B cell (primary cell): ENCODE measurements at regions of chr6 and their contacts with region 1.

Region 1: DNA sequence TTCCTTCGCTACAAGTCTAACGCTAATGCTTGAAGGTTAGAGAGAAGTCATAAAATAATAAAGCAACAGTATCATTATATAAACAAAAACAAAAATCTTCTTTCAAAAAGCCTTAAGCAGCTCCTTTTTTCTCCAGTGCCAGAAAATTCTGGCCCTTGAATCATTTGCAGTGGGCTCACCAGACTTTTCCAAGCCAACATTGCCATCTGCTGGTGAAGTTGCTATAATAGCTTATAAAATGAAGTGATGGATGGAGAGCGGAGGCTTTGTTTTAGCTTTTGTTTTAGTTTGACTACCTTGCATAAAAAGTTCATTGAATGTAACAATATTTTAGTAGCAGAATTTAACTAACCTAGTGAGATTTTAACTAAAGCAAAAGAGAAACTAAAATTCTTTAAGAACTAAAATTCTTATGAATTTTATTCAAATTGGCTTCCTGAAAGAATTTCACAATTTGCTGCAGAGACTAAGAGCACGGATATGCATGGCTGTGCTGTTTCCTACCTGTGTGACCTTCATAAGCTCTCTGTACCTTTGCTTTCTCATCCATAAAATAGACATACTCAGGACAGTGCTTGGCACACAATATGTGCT is 44.8 kb upstream of the SLC2A12 start:
- DNase-seq: peak; percentile 78
- ATAC-seq: no peak
- H3K4me3 ChIP-seq: no peak overlapping the region
- H3K4me3 Mint-ChIP-seq: no peak overlapping the region
- H3K27ac ChIP-seq: no peak overlapping the region
- H3K27ac Mint-ChIP-seq: no peak overlapping the region
- H3K4me1 ChIP-seq: no peaks in the 10 kb centered on the region
- H3K4me1 Mint-ChIP-seq: peaks cover 4% of the 10 kb centered on the region
- H3K27me3 ChIP-seq: no peaks in the 10 kb centered on the region
- H3K27me3 Mint-ChIP-seq: peaks cover 18% of the 10 kb centered on the region
- CTCF ChIP-seq: peak; percentile 87

Region 2: DNA sequence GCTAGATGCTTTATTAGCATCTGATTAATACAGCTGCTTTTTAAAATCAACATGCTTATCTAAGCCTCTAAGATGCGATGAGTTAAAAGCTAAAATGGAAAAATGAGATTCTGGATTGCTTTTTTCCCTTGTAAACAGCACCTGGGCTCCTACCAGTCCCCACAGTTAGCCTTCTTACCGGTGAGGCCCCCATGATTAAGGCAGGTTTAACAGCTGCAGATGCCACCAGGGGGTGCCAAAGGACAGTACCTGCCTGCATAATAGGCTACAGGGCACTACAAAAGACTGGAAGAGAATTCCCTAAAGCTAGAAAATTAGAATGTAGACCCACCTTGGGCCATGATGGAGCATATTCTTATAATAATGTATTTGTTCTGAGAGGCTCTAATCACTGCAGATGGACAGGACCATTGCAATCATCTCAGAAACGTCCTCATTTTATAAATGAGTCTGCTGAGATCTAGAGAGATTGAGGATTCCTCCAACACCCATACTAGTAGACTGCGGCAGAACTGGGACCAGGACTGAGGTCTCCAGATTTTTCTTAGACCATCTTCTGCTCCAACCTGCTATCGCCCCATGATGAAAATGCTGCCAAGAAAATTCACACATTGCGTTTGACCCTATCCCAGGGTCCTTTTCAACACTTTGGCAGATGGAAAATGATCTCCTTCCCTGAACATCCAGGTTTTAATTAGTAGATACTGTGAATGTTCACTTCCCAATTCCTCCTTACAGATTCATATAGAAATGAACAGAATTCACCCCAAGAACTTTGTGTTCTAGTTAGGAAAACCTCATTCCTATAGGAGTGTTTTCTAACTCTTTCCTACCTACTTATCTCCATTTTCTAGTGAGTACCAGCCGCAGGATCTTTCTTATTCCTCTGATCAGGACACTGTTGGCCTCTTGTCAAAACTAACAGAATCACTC is 1134.0 kb before region 1 on chr6:
- CTCF ChIA-PET with region 1: interaction called, 10 read pairs
- POLR2A ChIA-PET with region 1: no interaction called
- intact Hi-C with region 1: no loop called
- DNase-seq: peak; percentile 53
- ATAC-seq: peak; percentile 58
- H3K4me3 ChIP-seq: no peak overlapping the region
- H3K4me3 Mint-ChIP-seq: no peak overlapping the region
- H3K27ac ChIP-seq: no peak overlapping the region
- H3K27ac Mint-ChIP-seq: no peak overlapping the region
- H3K4me1 ChIP-seq: no peaks in the 10 kb centered on the region
- H3K4me1 Mint-ChIP-seq: peaks cover 3% of the 10 kb centered on the region
- H3K27me3 ChIP-seq: peaks cover 0 to 13% (median 4%) of the 10 kb centered on the region in 4 experiments
- H3K27me3 Mint-ChIP-seq: peaks cover 31% of the 10 kb centered on the region
- CTCF ChIP-seq: peak; percentile 79

Region 3: DNA sequence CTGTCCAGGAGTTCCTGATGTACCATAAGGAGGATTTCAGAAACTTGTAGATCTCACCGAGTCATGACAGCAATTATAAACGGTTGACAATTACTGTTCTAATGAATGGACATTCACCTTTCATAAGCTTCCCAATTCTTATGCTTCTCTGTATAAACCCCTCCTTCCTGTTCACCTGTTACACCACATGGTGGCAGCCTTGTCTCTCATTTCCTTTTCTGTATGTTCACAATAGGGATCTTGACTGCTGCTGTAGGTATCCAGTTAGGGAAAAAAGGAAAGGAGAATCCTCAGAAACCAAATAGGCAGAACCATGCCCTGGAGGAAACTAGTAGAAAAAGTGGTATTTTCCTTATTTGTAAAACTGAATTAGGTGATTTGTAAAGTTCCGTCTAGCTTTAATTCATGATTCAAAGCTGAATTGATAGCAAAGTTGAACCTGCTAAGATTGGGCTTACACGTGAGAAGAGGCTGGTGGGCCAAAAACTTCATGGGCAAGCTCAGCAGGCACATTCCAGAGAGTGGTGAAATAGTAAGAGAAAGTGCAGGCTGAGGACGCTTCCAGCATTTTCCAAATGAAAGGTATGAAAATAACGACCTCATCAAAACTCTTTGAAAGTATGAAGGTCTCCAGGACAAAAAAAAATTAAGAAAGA is 173.1 kb before region 1 on chr6:
- CTCF ChIA-PET with region 1: interaction called, 466 read pairs
- POLR2A ChIA-PET with region 1: no interaction called
- intact Hi-C with region 1: loop called (anchors 1 kb)
- DNase-seq: peak; percentile 77
- ATAC-seq: peak; percentile 88
- H3K4me3 ChIP-seq: no peak overlapping the region
- H3K4me3 Mint-ChIP-seq: no peak overlapping the region
- H3K27ac ChIP-seq: no peak overlapping the region
- H3K27ac Mint-ChIP-seq: no peak overlapping the region
- H3K4me1 ChIP-seq: no peaks in the 10 kb centered on the region
- H3K4me1 Mint-ChIP-seq: no peaks in the 10 kb centered on the region
- H3K27me3 ChIP-seq: peaks cover 0 to 18% (median 4%) of the 10 kb centered on the region in 4 experiments
- H3K27me3 Mint-ChIP-seq: peaks cover 33% of the 10 kb centered on the region
- CTCF ChIP-seq: peak; percentile 90

Region 4: GRCh38 chr6:133973109-133973971 is 123.9 kb before region 1 on chr6:
- CTCF ChIA-PET with region 1: interaction called, 54 read pairs
- POLR2A ChIA-PET with region 1: no interaction called
- intact Hi-C with region 1: loop called (anchors 1 kb)
- DNase-seq: peak; percentile 63
- ATAC-seq: peak; percentile 43
- H3K4me3 ChIP-seq: no peak overlapping the region
- H3K4me3 Mint-ChIP-seq: no peak overlapping the region
- H3K27ac ChIP-seq: no peak overlapping the region
- H3K27ac Mint-ChIP-seq: no peak overlapping the region
- H3K4me1 ChIP-seq: no peaks in the 10 kb centered on the region
- H3K4me1 Mint-ChIP-seq: peaks cover 27% of the 10 kb centered on the region
- H3K27me3 ChIP-seq: no peaks in the 10 kb centered on the region
- H3K27me3 Mint-ChIP-seq: no peaks in the 10 kb centered on the region
- CTCF ChIP-seq: peak; percentile 86

Region 5: DNA sequence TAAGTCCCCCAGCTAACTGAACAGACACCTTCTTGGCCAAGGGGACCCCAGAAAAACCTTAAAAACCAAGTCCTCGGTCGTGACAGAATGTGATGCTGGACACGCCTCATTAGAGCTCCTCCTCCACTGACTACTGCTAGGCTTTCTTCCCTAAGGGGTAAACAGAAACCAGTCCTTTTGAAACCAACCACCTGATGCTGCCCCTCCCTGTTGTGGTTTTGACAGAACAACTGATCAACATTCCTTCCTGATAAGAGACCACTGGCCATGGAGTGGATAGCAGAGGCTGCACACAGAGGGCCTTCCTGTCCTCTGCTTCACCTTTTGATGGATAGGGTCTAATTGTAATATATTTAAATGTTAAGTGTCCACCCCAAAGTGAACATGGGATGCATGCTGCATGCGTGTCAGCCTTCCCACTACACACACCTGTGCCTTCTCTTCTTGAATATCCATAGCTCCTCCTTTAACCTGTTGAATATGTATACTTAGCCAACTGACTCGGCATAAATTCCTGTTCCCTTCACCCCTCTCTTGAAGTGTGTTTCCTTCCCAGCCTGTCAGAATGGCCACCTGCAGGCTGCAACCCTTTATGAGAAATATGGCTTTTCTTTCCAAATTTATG is 16.9 kb before region 1 on chr6:
- CTCF ChIA-PET with region 1: interaction called, 37 read pairs
- POLR2A ChIA-PET with region 1: no interaction called
- intact Hi-C with region 1: no loop called
- DNase-seq: peak; percentile 36
- ATAC-seq: peak; percentile 54
- H3K4me3 ChIP-seq: peak overlapping the region in 2 of 5 experiments; percentile 17 to 23
- H3K4me3 Mint-ChIP-seq: peak overlapping the region; percentile 75
- H3K27ac ChIP-seq: peak overlapping the region in 1 of 2 donors; percentile 31
- H3K27ac Mint-ChIP-seq: no peak overlapping the region
- H3K4me1 ChIP-seq: peaks cover 39 to 41% of the 10 kb centered on the region in 2 donors
- H3K4me1 Mint-ChIP-seq: peaks cover 37% of the 10 kb centered on the region
- H3K27me3 ChIP-seq: peaks cover 0 to 7% (median 0%) of the 10 kb centered on the region in 4 experiments
- H3K27me3 Mint-ChIP-seq: peaks cover 3% of the 10 kb centered on the region
- CTCF ChIP-seq: no peak

Region 6: DNA sequence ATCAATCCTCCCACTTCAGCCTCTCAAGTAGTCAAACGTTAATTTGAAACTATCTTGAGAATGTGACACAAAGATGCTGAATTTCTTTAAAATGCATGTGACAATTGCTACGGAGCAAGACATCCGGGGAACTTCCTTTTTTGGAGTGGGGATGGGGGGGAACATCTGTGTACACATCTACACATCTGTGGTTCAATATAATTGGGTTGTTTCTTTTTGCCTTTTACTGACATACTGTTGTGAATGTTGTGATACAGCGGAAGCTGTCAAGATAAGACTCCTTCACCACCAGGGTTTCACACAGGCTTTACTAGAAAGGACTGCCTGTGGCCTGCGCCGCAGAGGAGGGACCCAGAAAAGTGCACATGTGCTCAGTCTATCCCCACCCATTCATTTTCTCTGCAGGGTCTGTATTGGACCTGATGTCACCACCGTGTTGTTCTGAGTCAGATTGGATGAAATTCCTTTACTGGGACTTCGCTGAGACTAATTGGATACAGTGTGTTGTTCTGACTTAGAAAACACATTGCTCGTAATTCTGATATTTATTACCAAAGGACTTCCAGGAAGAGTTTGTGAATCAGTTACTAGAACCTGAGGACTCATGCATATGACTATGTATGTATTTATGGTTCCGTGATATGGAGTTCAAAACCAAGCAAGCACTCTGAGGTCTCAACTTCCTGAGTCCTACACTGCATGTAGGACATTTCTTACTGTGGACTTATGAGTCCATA is 319.4 kb after region 1 on chr6:
- CTCF ChIA-PET with region 1: no interaction called
- POLR2A ChIA-PET with region 1: no interaction called
- intact Hi-C with region 1: no loop called
- DNase-seq: no peak
- ATAC-seq: no peak
- H3K4me3 ChIP-seq: no peak overlapping the region
- H3K4me3 Mint-ChIP-seq: no peak overlapping the region
- H3K27ac ChIP-seq: no peak overlapping the region
- H3K27ac Mint-ChIP-seq: no peak overlapping the region
- H3K4me1 ChIP-seq: peaks cover 12% of the 10 kb centered on the region in 2 donors
- H3K4me1 Mint-ChIP-seq: peaks cover 21% of the 10 kb centered on the region
- H3K27me3 ChIP-seq: no peaks in the 10 kb centered on the region
- H3K27me3 Mint-ChIP-seq: no peaks in the 10 kb centered on the region
- CTCF ChIP-seq: no peak